MCF 10A (cell line): ENCODE measurements at regions of chr11 and their contacts with region 1.

Region 1: GRCh38 chr11:6315811-6316425 is 4.4 kb downstream of the CAVIN3 start:
- DNase-seq: peak; percentile 73
- H3K4me3 Mint-ChIP-seq: no peak overlapping the region
- H3K27ac Mint-ChIP-seq: no peak overlapping the region
- H3K4me1 Mint-ChIP-seq: peaks cover 18% of the 10 kb centered on the region
- H3K27me3 Mint-ChIP-seq: no peaks in the 10 kb centered on the region
- CTCF ChIP-seq: peak; percentile 80

Region 2: GRCh38 chr11:6022956-6023355 is 293.0 kb before region 1 on chr11:
- CTCF ChIA-PET with region 1: interaction called, 66 read pairs
- POLR2A ChIA-PET with region 1: interaction called, 3 read pairs
- intact Hi-C with region 1: loop called (anchors 1 kb)
- DNase-seq: peak; percentile 61
- H3K4me3 Mint-ChIP-seq: no peak overlapping the region
- H3K27ac Mint-ChIP-seq: no peak overlapping the region
- H3K4me1 Mint-ChIP-seq: no peaks in the 10 kb centered on the region
- H3K27me3 Mint-ChIP-seq: peaks cover 33% of the 10 kb centered on the region
- CTCF ChIP-seq: peak; percentile 56

Region 3: GRCh38 chr11:6196396-6196795 is 119.5 kb before region 1 on chr11:
- CTCF ChIA-PET with region 1: no interaction called
- POLR2A ChIA-PET with region 1: no interaction called
- intact Hi-C with region 1: no loop called
- DNase-seq: no peak
- H3K4me3 Mint-ChIP-seq: no peak overlapping the region
- H3K27ac Mint-ChIP-seq: no peak overlapping the region
- H3K4me1 Mint-ChIP-seq: peaks cover 4% of the 10 kb centered on the region
- H3K27me3 Mint-ChIP-seq: no peaks in the 10 kb centered on the region
- CTCF ChIP-seq: no peak

Region 4: DNA sequence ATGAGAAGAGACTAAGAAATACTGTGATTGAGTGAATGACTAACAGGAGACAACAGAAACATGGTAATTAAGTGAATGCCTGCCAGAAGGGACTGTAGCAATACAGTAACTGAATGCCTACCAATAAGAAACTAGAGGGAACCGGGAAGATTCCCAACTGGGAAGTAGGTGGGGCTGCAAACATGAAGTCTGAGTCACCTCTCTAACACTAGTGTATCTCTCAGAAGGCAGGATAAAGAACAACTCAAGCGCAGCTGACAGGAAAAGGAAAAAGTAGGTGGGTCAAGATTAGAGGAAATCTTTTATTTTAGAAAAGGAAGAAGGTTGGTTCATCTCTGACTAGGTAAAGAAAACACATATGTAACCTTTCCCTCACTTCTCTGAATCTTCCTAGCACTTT is 96.6 kb before region 1 on chr11:
- CTCF ChIA-PET with region 1: interaction called, 17 read pairs
- POLR2A ChIA-PET with region 1: interaction called, 15 read pairs
- intact Hi-C with region 1: no loop called
- DNase-seq: peak; percentile 95
- H3K4me3 Mint-ChIP-seq: no peak overlapping the region
- H3K27ac Mint-ChIP-seq: peak overlapping the region; percentile 57
- H3K4me1 Mint-ChIP-seq: peaks cover 13% of the 10 kb centered on the region
- H3K27me3 Mint-ChIP-seq: no peaks in the 10 kb centered on the region
- CTCF ChIP-seq: no peak

Region 5: DNA sequence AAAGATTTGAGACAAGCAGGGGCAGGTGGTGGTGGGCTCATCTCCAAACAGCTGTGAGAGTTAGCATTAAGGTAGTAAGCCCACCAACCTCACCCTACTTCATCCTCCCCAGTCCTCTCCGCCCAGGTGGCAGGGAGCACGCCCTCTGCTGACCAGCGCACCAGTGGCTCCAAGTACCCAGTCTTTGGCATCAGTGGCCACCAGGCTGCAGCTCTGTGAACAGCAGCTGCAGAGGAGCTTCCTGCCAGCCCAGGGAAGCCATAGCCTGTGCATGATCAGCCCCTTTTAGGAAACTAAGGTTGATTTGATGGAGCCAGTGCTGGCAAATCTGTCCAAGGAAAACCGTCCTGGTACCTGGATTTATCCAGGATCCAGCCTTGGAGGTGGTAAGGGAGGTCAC is 17.3 kb before region 1 on chr11:
- CTCF ChIA-PET with region 1: interaction called, 54 read pairs
- POLR2A ChIA-PET with region 1: interaction called, 4 read pairs
- intact Hi-C with region 1: loop called (anchors 1 kb)
- DNase-seq: peak; percentile 55
- H3K4me3 Mint-ChIP-seq: no peak overlapping the region
- H3K27ac Mint-ChIP-seq: no peak overlapping the region
- H3K4me1 Mint-ChIP-seq: no peaks in the 10 kb centered on the region
- H3K27me3 Mint-ChIP-seq: no peaks in the 10 kb centered on the region
- CTCF ChIP-seq: peak; percentile 54

Region 6: DNA sequence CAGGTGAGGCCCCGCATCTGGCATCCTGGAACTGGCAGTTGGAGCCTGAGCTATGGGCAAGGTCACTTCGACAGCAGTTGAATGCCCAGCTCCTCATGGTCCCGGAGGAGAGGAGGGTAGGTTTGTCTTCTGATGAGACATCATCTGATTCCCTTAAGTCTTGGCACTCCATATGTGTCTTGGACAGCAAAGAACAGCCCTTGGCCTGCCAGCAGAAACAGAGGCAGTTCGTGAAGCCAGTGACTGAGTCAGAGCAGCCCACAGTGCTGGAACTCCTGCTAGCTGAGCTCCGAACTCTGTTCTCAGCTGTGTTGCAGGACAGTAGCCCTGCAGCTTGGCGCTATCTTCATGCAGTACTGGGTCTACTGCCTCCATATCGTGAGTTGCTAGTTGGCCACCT is 182.2 kb after region 1 on chr11:
- CTCF ChIA-PET with region 1: no interaction called
- POLR2A ChIA-PET with region 1: no interaction called
- intact Hi-C with region 1: no loop called
- DNase-seq: no peak
- H3K4me3 Mint-ChIP-seq: no peak overlapping the region
- H3K27ac Mint-ChIP-seq: no peak overlapping the region
- H3K4me1 Mint-ChIP-seq: no peaks in the 10 kb centered on the region
- H3K27me3 Mint-ChIP-seq: no peaks in the 10 kb centered on the region
- CTCF ChIP-seq: no peak

Region 7: GRCh38 chr11:6757373-6757967 is 441.6 kb after region 1 on chr11:
- CTCF ChIA-PET with region 1: no interaction called
- POLR2A ChIA-PET with region 1: no interaction called
- intact Hi-C with region 1: no loop called
- DNase-seq: peak; percentile 55
- H3K4me3 Mint-ChIP-seq: no peak overlapping the region
- H3K27ac Mint-ChIP-seq: no peak overlapping the region
- H3K4me1 Mint-ChIP-seq: no peaks in the 10 kb centered on the region
- H3K27me3 Mint-ChIP-seq: no peaks in the 10 kb centered on the region
- CTCF ChIP-seq: peak; percentile 49